MCF 10A (cell line): ENCODE measurements at regions of chr1 and their contacts with region 1.

Region 1: DNA sequence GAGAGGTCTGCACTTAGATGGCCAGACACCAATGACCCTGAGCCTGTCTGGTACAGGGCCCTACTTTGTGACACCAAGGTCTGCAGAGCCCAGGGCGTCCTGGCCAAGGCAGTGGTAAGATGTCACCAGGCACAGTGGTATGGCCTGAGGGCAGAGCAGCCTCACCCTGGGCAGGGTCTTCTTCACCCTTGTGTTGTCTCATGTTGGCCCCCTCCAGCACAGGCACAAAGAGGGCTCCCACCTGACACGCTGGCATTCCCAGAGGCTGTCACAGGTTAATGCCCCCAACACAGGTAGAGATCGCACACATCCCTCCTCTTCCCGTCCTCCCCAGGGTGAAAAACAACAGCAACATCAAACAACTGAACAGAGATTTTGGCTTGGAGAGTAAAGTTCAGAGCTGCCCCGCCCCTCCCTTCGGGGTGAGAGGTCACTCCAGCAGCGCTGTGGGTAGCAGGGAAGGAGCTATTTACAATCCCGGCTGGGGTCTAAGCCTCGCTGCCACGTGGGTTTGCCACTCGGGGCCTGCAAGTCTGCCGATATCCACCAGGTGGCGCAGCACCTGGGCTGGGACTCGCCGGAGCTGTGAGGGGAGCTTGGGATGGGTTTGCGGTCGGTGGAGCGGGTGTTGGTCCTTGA is 12.6 kb downstream of the EFNA3 start:
- DNase-seq: peak; percentile 83
- H3K4me3 Mint-ChIP-seq: no peak overlapping the region
- H3K27ac Mint-ChIP-seq: no peak overlapping the region
- H3K4me1 Mint-ChIP-seq: peaks cover 26% of the 10 kb centered on the region
- H3K27me3 Mint-ChIP-seq: peaks cover 16% of the 10 kb centered on the region
- CTCF ChIP-seq: peak; percentile 100

Region 2: GRCh38 chr1:153880962-153881361 is 1210.2 kb before region 1 on chr1:
- CTCF ChIA-PET with region 1: no interaction called
- POLR2A ChIA-PET with region 1: no interaction called
- intact Hi-C with region 1: no loop called
- DNase-seq: peak; percentile 85
- H3K4me3 Mint-ChIP-seq: no peak overlapping the region
- H3K27ac Mint-ChIP-seq: no peak overlapping the region
- H3K4me1 Mint-ChIP-seq: peaks cover 3% of the 10 kb centered on the region
- H3K27me3 Mint-ChIP-seq: no peaks in the 10 kb centered on the region
- CTCF ChIP-seq: no peak

Region 3: GRCh38 chr1:155105604-155106022 is 14.4 kb after region 1 on chr1:
- CTCF ChIA-PET with region 1: interaction called, 51 read pairs
- POLR2A ChIA-PET with region 1: interaction called, 6 read pairs
- intact Hi-C with region 1: no loop called
- DNase-seq: peak; percentile 26
- H3K4me3 Mint-ChIP-seq: no peak overlapping the region
- H3K27ac Mint-ChIP-seq: peak overlapping the region; percentile 4
- H3K4me1 Mint-ChIP-seq: peaks cover 18% of the 10 kb centered on the region
- H3K27me3 Mint-ChIP-seq: no peaks in the 10 kb centered on the region
- CTCF ChIP-seq: no peak

Region 4: DNA sequence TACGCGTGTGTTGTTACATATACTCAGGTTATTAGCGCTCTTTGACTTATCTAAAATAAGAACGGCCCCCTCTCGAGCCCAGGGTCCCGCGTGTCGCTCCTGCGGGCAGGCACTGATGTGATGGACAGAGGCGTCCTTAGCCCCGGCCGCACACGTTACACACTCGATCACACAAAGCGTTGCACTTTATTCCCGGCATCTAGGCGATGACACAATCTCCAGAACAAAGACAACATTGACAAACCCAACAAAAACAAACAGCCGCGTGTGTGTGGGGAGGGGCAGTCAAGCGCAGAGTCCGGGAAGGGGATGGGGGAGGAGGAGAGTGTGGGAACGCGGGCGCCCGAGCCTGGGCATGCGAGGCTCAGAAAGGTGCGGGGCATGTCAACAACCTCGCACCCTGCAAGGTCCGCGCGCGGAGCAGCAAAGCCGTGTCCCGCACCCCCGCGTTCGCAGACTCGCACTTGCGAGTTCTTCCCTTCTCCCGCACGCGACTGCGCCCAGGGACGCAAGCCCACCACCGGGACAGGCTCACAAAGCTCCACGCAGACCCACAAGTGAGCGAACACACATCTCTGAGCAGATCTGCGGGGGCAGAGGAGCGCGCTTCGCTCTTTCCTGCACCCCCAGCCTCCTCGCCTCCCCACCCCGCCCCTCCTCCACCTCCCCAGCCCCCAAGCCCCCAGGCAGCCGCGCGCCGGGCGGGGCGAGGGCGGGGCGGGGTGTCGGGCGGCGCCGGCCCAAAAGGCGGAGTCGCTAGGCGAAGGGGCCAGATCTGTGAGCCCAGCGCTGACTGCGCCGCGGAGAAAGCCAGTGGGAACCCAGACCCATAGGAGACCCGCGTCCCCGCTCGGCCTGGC is 36.1 kb after region 1 on chr1 and contains the start of gene EFNA1:
- CTCF ChIA-PET with region 1: interaction called, 161 read pairs
- POLR2A ChIA-PET with region 1: interaction called, 66 read pairs
- intact Hi-C with region 1: loop called (anchors 1 kb)
- DNase-seq: peak; percentile 99
- H3K4me3 Mint-ChIP-seq: peak within 1 kb of the TSS; percentile 100
- H3K27ac Mint-ChIP-seq: peak within 1 kb of the TSS; percentile 90
- H3K4me1 Mint-ChIP-seq: peaks cover 60% of the 10 kb centered on the region
- H3K27me3 Mint-ChIP-seq: no peaks in the 10 kb centered on the region
- CTCF ChIP-seq: no peak
- total RNA-seq, gene EFNA1: 38.9 and 42.3 TPM in 2 replicates

Region 5: GRCh38 chr1:155145491-155145890 is 54.3 kb after region 1 on chr1:
- CTCF ChIA-PET with region 1: interaction called, 161 read pairs
- POLR2A ChIA-PET with region 1: interaction called, 4 read pairs
- intact Hi-C with region 1: no loop called
- DNase-seq: no peak
- H3K4me3 Mint-ChIP-seq: no peak overlapping the region
- H3K27ac Mint-ChIP-seq: no peak overlapping the region
- H3K4me1 Mint-ChIP-seq: no peaks in the 10 kb centered on the region
- H3K27me3 Mint-ChIP-seq: peaks cover 8% of the 10 kb centered on the region
- CTCF ChIP-seq: peak; percentile 12

Region 6: GRCh38 chr1:155167166-155168104 is 76.2 kb after region 1 on chr1:
- CTCF ChIA-PET with region 1: interaction called, 380 read pairs
- POLR2A ChIA-PET with region 1: interaction called, 12 read pairs
- intact Hi-C with region 1: loop called (anchors 1 kb)
- DNase-seq: peak; percentile 96
- H3K4me3 Mint-ChIP-seq: peak overlapping the region; percentile 30
- H3K27ac Mint-ChIP-seq: no peak overlapping the region
- H3K4me1 Mint-ChIP-seq: peaks cover 21% of the 10 kb centered on the region
- H3K27me3 Mint-ChIP-seq: no peaks in the 10 kb centered on the region
- CTCF ChIP-seq: peak; percentile 98

Region 7: DNA sequence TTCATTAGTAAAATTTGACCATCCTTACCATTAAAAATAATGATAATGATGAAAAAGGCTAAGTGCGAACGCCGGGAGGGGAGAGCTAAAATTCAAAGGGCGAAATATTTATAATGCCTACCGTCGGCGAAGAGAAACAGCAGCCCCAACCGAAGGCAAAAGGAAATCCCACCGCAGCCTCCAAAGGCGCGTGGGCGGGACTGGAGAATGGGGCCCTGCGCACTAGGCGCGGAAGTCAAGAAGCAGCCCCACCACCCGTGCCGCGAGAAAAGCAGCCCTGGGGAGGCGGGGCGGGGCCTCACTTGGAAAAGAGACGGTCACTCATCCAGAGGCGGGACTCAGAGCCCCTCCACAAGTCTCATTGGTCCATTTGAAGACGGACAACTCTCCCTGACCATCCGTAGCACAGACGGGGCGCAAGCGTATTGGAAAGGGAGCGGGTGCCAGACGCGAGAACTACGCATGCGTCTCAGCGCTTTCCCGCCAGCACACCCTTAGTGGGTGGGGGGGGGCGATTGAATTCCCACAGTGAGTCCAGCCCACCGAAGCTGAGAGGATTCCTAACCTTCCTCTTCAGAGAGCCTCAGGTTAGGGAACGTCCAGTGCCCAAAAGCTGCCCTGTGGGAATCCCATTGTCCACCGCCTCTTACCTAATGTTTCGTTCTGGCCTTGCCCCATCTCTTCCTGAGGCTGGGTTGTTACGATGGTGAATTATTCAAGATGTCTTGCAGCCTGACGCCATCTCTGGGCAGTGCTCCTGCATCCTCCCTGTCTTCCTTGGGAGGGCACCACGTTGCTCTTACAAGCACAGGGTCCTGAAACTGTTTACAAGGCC is 136.3 kb after region 1 on chr1:
- CTCF ChIA-PET with region 1: interaction called, 11 read pairs
- POLR2A ChIA-PET with region 1: interaction called, 3 read pairs
- intact Hi-C with region 1: no loop called
- DNase-seq: peak; percentile 100
- H3K4me3 Mint-ChIP-seq: peak overlapping the region; percentile 85
- H3K27ac Mint-ChIP-seq: peak overlapping the region; percentile 89
- H3K4me1 Mint-ChIP-seq: peaks cover 34% of the 10 kb centered on the region
- H3K27me3 Mint-ChIP-seq: no peaks in the 10 kb centered on the region
- CTCF ChIP-seq: no peak